CD8-positive, alpha-beta memory T cell (primary cell): ENCODE measurements at regions of chr4 and their contacts with region 1.

Region 1: DNA sequence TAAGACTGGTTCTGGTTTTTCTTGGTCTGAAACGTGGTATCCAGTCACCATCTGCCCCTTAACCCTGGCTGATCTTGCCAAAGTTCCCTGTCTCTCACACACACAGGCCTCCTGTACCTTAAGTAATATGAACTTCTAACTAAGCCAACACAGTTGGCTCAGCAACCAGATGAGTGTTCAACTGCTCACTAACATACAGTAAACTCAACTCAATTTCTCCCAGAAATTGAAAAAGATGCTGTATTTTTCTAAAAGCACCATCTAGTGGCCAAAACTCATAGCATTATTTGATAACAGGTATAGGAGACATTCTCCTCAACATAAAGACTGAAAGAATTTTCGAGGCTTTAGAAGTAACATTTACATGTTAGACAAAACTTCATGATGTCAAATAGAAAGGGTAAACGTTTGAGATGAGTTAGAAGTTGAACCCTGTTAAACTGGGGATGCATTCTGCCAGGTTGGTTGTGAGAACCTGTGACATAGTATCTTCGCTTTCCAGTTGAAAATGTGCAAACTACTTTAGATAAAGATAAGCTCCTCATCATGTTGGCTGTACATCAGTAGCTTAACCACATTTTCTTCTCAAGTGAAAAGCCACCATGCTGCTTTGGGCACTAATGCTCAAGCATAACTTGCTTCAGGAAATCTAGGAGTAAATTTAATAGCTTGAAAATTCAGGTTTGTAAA is 31.2 kb downstream of the CCNI start:
- DNase-seq: peak in 1 of 5 donors; percentile 23
- H3K4me3 ChIP-seq: no peak overlapping the region
- H3K4me3 Mint-ChIP-seq: no peak overlapping the region
- H3K27ac ChIP-seq: no peak overlapping the region
- H3K27ac Mint-ChIP-seq: peak overlapping the region in 5 of 8 donors; percentile 10 to 82 (median 58)
- H3K4me1 ChIP-seq: peaks cover 4% of the 10 kb centered on the region
- H3K4me1 Mint-ChIP-seq: peaks cover 6 to 12% (median 10%) of the 10 kb centered on the region in 3 donors
- H3K27me3 ChIP-seq: no peaks in the 10 kb centered on the region
- H3K27me3 Mint-ChIP-seq: no peaks in the 10 kb centered on the region

Region 2: DNA sequence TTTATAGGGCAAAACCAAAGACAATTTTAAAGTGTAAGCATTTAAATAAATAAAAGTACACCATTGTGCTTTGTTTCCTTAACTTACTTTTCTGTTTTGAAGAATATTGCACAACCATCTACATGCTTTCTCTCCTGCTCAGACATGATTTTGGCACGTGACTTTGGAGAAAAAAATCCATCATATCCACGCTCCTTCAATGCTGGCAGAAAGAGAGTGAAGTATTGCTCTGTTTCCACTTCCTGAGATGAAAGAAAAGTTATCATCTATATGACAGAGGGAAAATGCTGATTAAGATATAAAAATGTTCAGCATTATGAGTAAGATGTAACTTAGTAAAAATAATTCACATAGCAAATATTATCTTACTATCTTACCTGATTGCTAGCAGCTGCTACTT is 697.4 kb after region 1 on chr4:
- CTCF ChIA-PET with region 1: no interaction called
- POLR2A ChIA-PET with region 1: interaction called, 15 read pairs
- DNase-seq: no peak
- H3K4me3 ChIP-seq: no peak overlapping the region
- H3K4me3 Mint-ChIP-seq: no peak overlapping the region
- H3K27ac ChIP-seq: no peak overlapping the region
- H3K27ac Mint-ChIP-seq: no peak overlapping the region
- H3K4me1 ChIP-seq: peaks cover 22% of the 10 kb centered on the region
- H3K4me1 Mint-ChIP-seq: peaks cover 45 to 69% (median 59%) of the 10 kb centered on the region in 3 donors
- H3K27me3 ChIP-seq: no peaks in the 10 kb centered on the region
- H3K27me3 Mint-ChIP-seq: no peaks in the 10 kb centered on the region